ENCODE measurements at regions of chr12 and their contacts with region 1.

Region 1: GRCh38 chr12:122730215-122731014 is at the start of gene HCAR1:
- DNase-seq: peak; percentile 32 to 59
- H3K4me3 ChIP-seq: peak within 1 kb of the TSS; percentile 31 to 79 (median 60)
- H3K27ac ChIP-seq: peak within 1 kb of the TSS; percentile 86 to 90
- H3K4me1 ChIP-seq: no peaks in the 10 kb centered on the region
- H3K27me3 ChIP-seq: no peaks in the 10 kb centered on the region
- CTCF ChIP-seq: peak in 2 of 3 donors; percentile 30 to 37
- POLR2A ChIP-seq: no peak
- total RNA-seq, gene HCAR1: 3.2 to 34.0 (median 20.6) TPM

Region 2: DNA sequence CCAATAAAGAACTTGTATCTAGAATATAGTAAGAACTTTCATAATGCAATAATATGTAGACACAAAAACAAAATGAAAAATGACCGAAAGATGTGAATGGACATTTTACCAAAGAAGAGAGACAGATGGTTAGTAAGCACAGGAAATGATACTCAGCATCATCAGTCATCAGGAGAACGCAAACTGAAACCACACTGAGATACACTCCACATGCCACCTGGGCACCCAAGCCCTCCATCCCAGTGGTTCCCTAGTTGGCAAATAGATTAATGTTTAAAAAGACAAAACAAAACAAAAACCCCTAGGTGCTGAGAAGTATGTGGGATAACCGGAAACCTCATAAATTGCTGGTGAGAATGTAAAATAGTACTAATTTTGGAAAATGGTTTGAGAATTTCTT is 437.3 kb before region 1 on chr12:
- intact Hi-C with region 1: no loop called
- DNase-seq: no peak
- H3K4me3 ChIP-seq: no peak overlapping the region
- H3K27ac ChIP-seq: no peak overlapping the region
- H3K4me1 ChIP-seq: no peaks in the 10 kb centered on the region
- H3K27me3 ChIP-seq: no peaks in the 10 kb centered on the region
- CTCF ChIP-seq: no peak
- POLR2A ChIP-seq: no peak

Region 3: GRCh38 chr12:122646517-122647217 is 83.7 kb before region 1 on chr12:
- intact Hi-C with region 1: loop called (anchors 10 kb)
- DNase-seq: no peak
- H3K4me3 ChIP-seq: no peak overlapping the region
- H3K27ac ChIP-seq: no peak overlapping the region
- H3K4me1 ChIP-seq: no peaks in the 10 kb centered on the region
- H3K27me3 ChIP-seq: no peaks in the 10 kb centered on the region
- CTCF ChIP-seq: no peak
- POLR2A ChIP-seq: no peak

Region 4: DNA sequence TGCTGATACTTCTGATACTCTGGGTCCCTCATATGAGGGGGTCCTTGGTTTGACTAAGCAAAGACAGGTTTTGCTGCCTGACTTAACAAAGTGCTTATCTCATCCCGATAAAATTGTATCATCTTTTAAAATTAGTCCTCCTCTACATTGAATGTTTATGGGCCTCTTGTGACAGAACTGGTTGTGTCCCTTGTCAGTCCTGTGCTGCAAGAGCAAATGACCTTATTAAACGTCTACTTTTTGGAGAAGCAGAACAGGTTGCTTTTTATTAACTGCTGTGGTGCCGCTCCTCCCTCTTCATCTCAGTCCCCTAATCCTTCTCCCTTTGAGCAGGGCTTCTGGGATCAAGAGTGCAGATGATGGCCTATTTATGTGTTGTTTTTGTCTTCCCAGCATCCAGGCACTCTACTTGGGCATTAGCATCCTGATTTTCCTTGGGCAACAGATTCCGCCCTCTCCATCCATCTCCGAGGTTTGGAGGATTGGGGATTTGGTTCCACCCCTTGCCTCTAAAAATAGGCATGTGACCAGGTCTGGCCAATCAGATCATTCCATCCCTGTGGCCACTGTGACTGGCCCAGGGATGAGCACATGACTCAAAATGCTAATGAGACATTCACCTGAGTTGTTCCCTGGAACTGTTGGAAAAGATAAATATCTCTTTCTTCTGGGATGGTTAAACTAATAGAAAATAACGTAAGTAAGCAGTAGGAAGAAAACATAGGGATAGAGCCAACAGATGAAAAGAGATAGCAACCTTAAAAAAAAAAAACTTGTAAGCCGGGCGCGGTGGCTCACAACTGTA is 19.4 kb after region 1 on chr12:
- intact Hi-C with region 1: loop called (anchors 2 kb)
- DNase-seq: peak in 1 of 2 donors; percentile 71
- H3K4me3 ChIP-seq: no peak overlapping the region
- H3K27ac ChIP-seq: peak overlapping the region in 1 of 2 donors; percentile 10
- H3K4me1 ChIP-seq: peaks cover 5 to 8% of the 10 kb centered on the region in 2 donors
- H3K27me3 ChIP-seq: no peaks in the 10 kb centered on the region
- CTCF ChIP-seq: no peak
- POLR2A ChIP-seq: no peak

Region 5: DNA sequence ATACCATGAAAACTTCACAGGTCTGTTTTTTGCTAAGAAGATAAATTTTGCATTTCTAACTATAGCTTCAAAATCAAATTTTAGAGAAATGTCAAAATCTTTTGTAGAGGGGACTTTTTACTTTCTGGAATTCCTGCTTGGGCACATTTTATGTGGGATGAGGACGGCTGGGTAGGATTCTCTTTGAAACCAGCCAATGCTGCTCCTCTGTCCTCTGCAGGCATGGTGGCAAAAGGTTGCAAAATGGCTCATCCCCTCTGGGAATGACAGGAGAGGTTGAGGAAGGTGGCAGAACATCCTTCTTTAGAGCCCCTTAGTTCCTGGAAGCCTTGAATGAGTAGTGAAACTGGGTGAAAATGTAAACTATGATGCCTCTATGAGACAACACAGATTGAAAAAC is 37.3 kb after region 1 on chr12:
- intact Hi-C with region 1: no loop called
- DNase-seq: no peak
- H3K4me3 ChIP-seq: no peak overlapping the region
- H3K27ac ChIP-seq: no peak overlapping the region
- H3K4me1 ChIP-seq: no peaks in the 10 kb centered on the region
- H3K27me3 ChIP-seq: no peaks in the 10 kb centered on the region
- CTCF ChIP-seq: no peak
- POLR2A ChIP-seq: no peak

Region 6: DNA sequence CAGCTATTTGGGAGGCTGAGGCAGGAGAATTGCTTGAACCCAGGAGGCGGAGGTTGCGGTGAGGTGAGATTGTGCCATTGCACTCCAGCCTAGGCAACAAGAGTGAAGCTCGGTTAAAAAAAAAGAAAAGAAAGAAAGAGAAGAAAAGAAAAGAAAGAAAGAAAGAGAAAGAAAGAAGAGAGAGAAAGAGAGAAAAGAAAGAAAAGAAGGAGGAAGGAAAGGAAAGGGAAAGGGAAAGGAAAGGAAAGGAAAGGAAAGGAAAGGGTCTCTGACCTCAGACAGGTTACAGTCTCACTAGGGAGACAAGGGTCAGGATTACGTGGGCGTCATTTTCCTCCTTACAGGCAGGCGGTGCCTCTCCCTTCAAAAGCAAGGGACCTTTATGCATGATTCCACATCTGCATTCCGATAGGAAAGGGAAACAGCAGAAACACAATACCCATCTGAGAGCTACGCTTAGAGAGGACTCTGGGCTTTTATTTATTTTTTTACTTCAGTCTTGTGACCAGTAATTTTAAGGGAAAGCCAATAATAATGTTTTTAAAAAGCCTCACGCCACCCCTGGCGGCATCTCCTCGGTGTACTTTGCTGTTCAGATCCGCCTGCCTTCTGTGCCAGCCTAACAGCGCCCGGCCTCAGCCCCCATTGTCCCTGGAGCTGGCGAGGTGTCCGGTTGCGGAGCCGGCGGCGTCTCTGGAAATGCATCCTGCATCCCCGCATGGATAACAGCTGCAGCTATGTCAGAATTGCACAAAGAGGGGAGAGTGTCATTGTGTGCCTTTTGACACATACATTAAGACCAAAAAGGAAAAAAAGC is 103.9 kb after region 1 on chr12:
- intact Hi-C with region 1: no loop called
- DNase-seq: no peak
- H3K4me3 ChIP-seq: peak overlapping the region; percentile 61 to 92 (median 81)
- H3K27ac ChIP-seq: peak overlapping the region; percentile 93 to 96
- H3K4me1 ChIP-seq: no peaks in the 10 kb centered on the region
- H3K27me3 ChIP-seq: no peaks in the 10 kb centered on the region
- CTCF ChIP-seq: peak in 1 of 3 donors; percentile 14
- POLR2A ChIP-seq: no peak